Common myeloid progenitor, CD34-positive (primary cell): ENCODE measurements at regions of chr17 and their contacts with region 1.

Region 1: DNA sequence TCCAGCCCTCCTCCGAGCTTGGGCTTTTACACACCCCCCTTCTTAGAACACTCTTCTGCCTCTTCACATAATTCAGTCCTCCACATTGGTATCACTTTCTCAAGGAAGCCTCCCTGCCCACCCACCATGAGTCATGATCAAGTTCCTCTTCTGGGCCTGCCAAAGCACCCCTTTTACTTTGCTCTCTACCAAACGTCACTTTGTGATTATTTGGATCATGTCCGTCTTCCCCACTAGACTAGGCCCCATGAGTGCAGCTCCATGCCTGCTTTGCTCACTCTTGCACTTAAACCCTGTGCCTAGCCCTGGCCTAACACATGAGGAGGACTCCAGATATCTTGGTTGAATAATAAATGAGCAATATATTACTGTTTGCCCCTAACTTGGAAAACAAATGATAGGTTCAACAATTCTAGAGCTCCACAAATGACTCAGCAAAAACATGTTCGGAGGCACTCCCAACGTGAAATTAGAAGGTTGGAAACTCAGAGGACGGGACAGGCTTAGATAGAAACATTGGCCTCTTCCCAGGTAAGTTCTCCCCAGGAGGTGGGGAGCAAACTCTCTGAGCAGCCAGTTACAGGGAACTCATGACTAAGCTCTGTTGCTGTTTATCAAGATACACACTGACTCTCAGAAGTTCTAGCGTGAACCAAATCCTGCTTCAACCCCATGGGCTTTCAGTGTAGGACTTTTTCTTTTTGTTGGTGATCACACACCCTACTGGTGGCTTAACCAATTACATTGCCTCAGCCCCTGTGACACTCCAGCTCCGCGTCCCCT is 28.3 kb downstream of the G6PC1 start:
- DNase-seq: peak; percentile 94 to 98 (median 97)
- H3K4me3 ChIP-seq: peak overlapping the region in 5 of 7 experiments; percentile 0 to 56 (median 21)
- H3K27ac ChIP-seq: peak overlapping the region; percentile 82 to 94
- H3K4me1 ChIP-seq: peaks cover 6 to 26% (median 18%) of the 10 kb centered on the region in 4 experiments
- H3K27me3 ChIP-seq: no peaks in the 10 kb centered on the region

Region 2: DNA sequence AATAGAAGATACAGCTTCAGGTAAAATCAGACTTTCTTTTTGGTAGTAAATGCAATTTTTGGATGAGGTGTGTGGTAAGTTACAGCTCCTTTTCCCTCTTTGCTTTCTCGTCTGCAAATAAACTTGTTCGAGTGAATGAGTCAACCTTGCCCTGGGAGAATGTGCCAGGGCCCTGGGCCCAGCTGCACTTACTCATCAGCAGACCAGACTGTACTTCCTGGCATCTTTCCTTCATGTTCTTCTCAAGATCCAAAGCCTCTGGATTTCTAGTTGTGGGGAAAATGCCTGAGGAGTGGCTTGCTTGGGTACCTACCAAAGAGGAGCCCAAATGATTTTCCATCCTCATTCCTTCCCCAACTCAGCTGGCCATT is 33.7 kb before region 1 on chr17:
- CTCF ChIA-PET with region 1: interaction called, 10 read pairs
- POLR2A ChIA-PET with region 1: no interaction called
- DNase-seq: no peak
- H3K4me3 ChIP-seq: no peak overlapping the region
- H3K27ac ChIP-seq: no peak overlapping the region
- H3K4me1 ChIP-seq: peaks cover 2 to 27% (median 17%) of the 10 kb centered on the region in 4 experiments
- H3K27me3 ChIP-seq: no peaks in the 10 kb centered on the region

Region 3: DNA sequence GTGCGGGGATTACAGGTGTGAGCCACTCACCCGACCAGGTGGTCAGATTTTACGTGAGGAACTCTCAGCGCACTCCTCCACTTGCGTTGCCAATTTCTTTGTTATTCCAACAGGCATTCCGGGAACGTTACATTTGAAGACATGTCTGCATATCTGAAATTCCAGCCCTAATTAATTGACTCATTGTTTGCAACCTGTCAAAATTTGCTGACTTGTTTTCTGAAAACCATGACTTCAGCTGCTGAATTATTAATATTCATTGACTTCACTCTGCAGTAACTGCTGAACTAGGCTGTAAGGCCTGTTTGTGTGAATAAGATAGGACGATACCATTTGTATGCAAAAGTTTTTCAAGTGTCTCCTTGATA is 11.7 kb before region 1 on chr17:
- CTCF ChIA-PET with region 1: interaction called, 10 read pairs
- POLR2A ChIA-PET with region 1: no interaction called
- DNase-seq: no peak
- H3K4me3 ChIP-seq: no peak overlapping the region
- H3K27ac ChIP-seq: no peak overlapping the region
- H3K4me1 ChIP-seq: peaks cover 0 to 10% (median 5%) of the 10 kb centered on the region in 4 experiments
- H3K27me3 ChIP-seq: no peaks in the 10 kb centered on the region